ENCODE measurements at regions of chr1 and their contacts with region 1.

Region 1: DNA sequence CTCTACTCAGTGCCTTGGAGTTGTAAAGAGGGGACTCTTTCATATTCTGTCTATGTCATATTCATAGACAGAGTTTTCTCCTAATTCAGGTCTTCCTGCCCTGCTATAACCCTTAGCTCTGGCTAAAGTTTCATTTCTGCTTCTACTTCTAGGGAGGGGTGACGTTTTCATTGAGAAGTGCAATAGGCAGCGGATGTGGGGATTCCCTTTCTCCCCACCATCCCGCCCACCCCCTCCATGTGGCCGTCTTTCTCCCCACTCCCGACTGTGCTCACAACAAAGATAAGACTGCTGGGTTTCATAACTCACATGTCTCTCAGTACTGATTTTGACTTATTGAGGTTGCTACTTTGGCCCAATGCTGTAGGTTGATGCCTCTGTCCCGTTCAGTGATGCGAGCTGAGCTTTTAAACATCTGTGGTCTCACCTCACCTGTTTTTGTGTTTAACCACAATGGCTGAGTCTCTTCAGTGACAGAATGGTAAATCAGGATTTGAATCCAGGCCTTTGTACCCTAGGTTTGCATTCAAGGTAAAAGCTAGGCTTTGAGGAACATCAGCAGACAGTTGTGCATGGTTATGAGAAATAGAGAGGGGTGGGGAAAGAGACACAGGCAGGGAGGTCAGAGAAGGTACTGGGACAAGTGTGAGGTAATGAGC is 7.8 kb upstream of the KIF14 start:
- DNase-seq: peak; percentile 89
- ATAC-seq: peak; percentile 82
- H3K4me3 ChIP-seq: peak overlapping the region; percentile 61
- H3K27ac ChIP-seq: peak overlapping the region; percentile 96
- H3K4me1 ChIP-seq: peaks cover 37% of the 10 kb centered on the region
- H3K27me3 ChIP-seq: no peaks in the 10 kb centered on the region
- CTCF ChIP-seq: no peak
- EP300 ChIP-seq: peak; percentile 54 to 55; a peak in 2 of 4 replicates
- POLR2A ChIP-seq: no peak
- RAD21 ChIP-seq: no peak

Region 2: GRCh38 chr1:200558866-200559459 is 69.4 kb before region 1 on chr1:
- CTCF ChIA-PET with region 1: interaction called, 43 read pairs
- POLR2A ChIA-PET with region 1: interaction called, 5 read pairs
- RAD21 ChIA-PET with region 1: interaction called, 70 read pairs
- SMC1A ChIA-PET with region 1: interaction called, 37 read pairs
- in situ Hi-C with region 1: no loop called
- intact Hi-C with region 1: no loop called
- DNase-seq: no peak
- ATAC-seq: peak; percentile 64
- H3K4me3 ChIP-seq: no peak overlapping the region
- H3K27ac ChIP-seq: no peak overlapping the region
- H3K4me1 ChIP-seq: peaks cover 17% of the 10 kb centered on the region
- H3K27me3 ChIP-seq: no peaks in the 10 kb centered on the region
- CTCF ChIP-seq: peak; percentile 56 to 77 (median 60)
- EP300 ChIP-seq: no peak
- POLR2A ChIP-seq: no peak
- RAD21 ChIP-seq: peak; percentile 82

Region 3: DNA sequence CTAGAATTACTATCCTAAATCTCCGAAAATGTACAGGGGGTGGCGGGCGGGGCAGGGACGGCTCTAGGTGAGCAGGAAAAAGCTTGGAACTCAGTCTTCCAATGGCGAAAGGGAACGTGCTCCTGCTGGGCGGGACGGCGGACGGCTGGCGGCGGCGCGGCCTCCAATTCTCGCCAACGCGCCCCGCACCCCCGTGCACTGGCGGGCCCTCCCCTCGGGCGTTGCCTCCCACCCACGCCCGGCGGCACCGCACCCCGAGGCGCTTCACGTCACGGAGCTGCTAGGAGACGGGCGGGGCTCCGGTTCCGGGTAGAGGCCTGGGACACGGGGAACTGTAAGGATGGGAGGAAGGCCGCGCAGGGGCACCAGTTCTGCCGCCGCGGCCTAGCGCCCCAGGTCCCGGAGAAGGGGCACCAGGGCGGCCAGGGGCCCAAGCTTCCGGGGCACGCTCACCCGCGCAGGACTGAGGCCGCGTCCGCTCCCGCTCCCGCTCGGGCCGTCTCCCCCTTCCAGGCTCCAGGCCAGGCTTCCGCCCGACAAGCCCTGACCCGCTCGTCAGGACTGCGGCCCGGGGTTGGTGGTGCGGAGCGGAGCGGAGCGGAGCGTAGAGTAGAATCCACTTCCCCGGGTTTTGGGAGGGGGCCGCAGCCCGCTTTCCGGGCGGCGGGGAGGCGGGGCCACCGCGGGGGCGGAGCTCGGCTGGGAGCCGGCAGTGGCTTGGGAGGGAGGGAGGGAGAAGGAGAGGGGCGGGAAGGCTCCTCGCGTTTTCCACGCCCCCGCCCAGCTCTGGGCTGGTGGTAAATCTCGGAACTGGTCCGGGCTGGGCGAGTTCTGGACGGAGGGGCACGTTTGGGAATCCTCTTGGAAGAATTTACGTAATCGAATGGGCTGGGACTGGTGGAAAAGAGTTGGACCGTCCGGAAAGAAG is 41.2 kb after region 1 on chr1 and contains the start of gene DDX59:
- CTCF ChIA-PET with region 1: interaction called, 36 read pairs
- POLR2A ChIA-PET with region 1: interaction called, 38 read pairs
- RAD21 ChIA-PET with region 1: interaction called, 175 read pairs
- SMC1A ChIA-PET with region 1: interaction called, 79 read pairs
- in situ Hi-C with region 1: no loop called
- intact Hi-C with region 1: loop called (anchors 1 kb)
- DNase-seq: peak; percentile 80
- ATAC-seq: peak; percentile 90
- H3K4me3 ChIP-seq: peak within 1 kb of the TSS; percentile 85
- H3K27ac ChIP-seq: peak within 1 kb of the TSS; percentile 98
- H3K4me1 ChIP-seq: no peaks in the 10 kb centered on the region; the same call in 1 of the 2 replicates
- H3K27me3 ChIP-seq: no peaks in the 10 kb centered on the region
- CTCF ChIP-seq: no peak
- EP300 ChIP-seq: no peak
- POLR2A ChIP-seq: peak; percentile 91
- RAD21 ChIP-seq: no peak
- polyA plus RNA-seq, gene DDX59: 17.3 to 17.5 TPM

Region 4: GRCh38 chr1:200762099-200762498 is 133.7 kb after region 1 on chr1:
- CTCF ChIA-PET with region 1: no interaction called
- POLR2A ChIA-PET with region 1: no interaction called
- RAD21 ChIA-PET with region 1: no interaction called
- SMC1A ChIA-PET with region 1: no interaction called
- in situ Hi-C with region 1: no loop called
- intact Hi-C with region 1: no loop called
- DNase-seq: no peak
- ATAC-seq: no peak
- H3K4me3 ChIP-seq: no peak overlapping the region
- H3K27ac ChIP-seq: no peak overlapping the region
- H3K4me1 ChIP-seq: no peaks in the 10 kb centered on the region
- H3K27me3 ChIP-seq: no peaks in the 10 kb centered on the region
- CTCF ChIP-seq: no peak
- EP300 ChIP-seq: no peak
- POLR2A ChIP-seq: no peak
- RAD21 ChIP-seq: no peak

Region 5: GRCh38 chr1:200780545-200781369 is 152.4 kb after region 1 on chr1:
- CTCF ChIA-PET with region 1: interaction called, 45 read pairs
- POLR2A ChIA-PET with region 1: interaction called, 4 read pairs
- RAD21 ChIA-PET with region 1: interaction called, 12 read pairs
- SMC1A ChIA-PET with region 1: interaction called, 14 read pairs
- in situ Hi-C with region 1: no loop called
- intact Hi-C with region 1: no loop called
- DNase-seq: peak; percentile 61
- ATAC-seq: peak; percentile 89
- H3K4me3 ChIP-seq: peak overlapping the region; percentile 4; the same call in 1 of the 2 replicates
- H3K27ac ChIP-seq: peak overlapping the region; percentile 71
- H3K4me1 ChIP-seq: peaks cover 10% of the 10 kb centered on the region
- H3K27me3 ChIP-seq: no peaks in the 10 kb centered on the region
- CTCF ChIP-seq: no peak
- EP300 ChIP-seq: no peak
- POLR2A ChIP-seq: no peak
- RAD21 ChIP-seq: no peak

Region 6: GRCh38 chr1:200866521-200866920 is 238.2 kb after region 1 on chr1:
- CTCF ChIA-PET with region 1: interaction called, 21 read pairs
- POLR2A ChIA-PET with region 1: interaction called, 7 read pairs
- RAD21 ChIA-PET with region 1: interaction called, 10 read pairs
- SMC1A ChIA-PET with region 1: interaction called, 10 read pairs
- in situ Hi-C with region 1: no loop called
- intact Hi-C with region 1: loop called (anchors 2 kb)
- DNase-seq: peak; percentile 98
- ATAC-seq: peak; percentile 74
- H3K4me3 ChIP-seq: no peak overlapping the region
- H3K27ac ChIP-seq: peak overlapping the region; percentile 71
- H3K4me1 ChIP-seq: peaks cover 71% of the 10 kb centered on the region
- H3K27me3 ChIP-seq: no peaks in the 10 kb centered on the region
- CTCF ChIP-seq: no peak
- EP300 ChIP-seq: peak; percentile 96 to 97
- POLR2A ChIP-seq: no peak
- RAD21 ChIP-seq: peak; percentile 22; the same call in 1 of the 2 replicates

Region 7: DNA sequence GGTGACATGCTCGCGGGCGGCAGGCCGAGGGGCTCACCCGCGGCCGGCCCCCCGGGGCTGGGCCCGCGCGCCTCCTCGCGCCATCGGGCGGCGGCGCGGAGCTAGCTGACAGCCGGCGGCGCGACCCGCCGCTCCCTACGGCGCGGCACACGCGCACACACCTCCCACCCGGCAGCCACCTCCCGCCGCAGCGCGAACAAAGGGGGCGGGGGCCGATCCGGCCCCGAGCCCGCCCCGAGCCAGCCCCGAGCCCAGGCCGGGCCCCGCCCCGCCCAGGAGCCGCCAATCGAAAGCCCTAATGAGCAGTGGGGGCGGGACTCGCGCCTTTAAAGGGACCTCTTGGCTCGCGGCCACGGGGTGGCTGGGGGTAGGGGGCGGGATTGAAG is 395.2 kb after region 1 on chr1 and contains the start of gene KIF21B:
- CTCF ChIA-PET with region 1: interaction called, 23 read pairs
- POLR2A ChIA-PET with region 1: interaction called, 12 read pairs
- RAD21 ChIA-PET with region 1: no interaction called
- SMC1A ChIA-PET with region 1: interaction called, 3 read pairs
- in situ Hi-C with region 1: no loop called
- intact Hi-C with region 1: no loop called
- DNase-seq: no peak
- ATAC-seq: peak; percentile 68
- H3K4me3 ChIP-seq: peak within 1 kb of the TSS; percentile 93
- H3K27ac ChIP-seq: peak within 1 kb of the TSS; percentile 94
- H3K4me1 ChIP-seq: peaks cover 81% of the 10 kb centered on the region
- H3K27me3 ChIP-seq: no peaks in the 10 kb centered on the region
- CTCF ChIP-seq: no peak
- EP300 ChIP-seq: no peak
- POLR2A ChIP-seq: peak; percentile 74
- RAD21 ChIP-seq: no peak
- polyA plus RNA-seq, gene KIF21B: 2.3 to 2.9 TPM

Region 8: DNA sequence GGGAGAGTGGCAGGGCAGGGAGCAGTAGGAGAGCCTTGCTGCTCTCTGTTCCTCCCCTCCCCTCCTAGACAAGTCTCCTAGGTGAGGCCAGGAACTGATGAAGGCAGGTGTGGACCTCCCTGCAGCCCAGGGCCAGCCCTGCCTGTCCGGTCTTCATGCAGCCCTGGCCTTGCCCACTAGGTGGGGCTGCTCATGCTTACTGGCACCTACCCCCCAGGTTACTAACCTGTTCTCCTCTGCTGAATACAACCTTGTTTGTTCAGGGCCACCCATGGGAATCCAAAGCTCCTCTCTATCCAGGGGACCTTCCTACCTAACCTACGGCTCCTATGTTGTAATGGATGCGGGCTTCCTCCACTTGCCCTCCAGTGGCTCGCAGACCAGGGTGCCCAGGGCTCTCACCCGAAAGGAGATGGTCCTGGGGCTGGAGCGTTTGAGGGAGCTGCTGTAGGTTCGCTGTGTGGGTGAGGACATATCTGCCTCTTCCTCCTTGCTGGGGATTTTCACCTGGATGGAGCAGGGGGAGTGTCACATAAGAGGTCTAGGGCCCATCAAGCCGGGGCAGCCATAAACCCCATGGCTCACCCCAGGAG is 757.0 kb after region 1 on chr1:
- CTCF ChIA-PET with region 1: no interaction called
- POLR2A ChIA-PET with region 1: no interaction called
- RAD21 ChIA-PET with region 1: no interaction called
- SMC1A ChIA-PET with region 1: no interaction called
- in situ Hi-C with region 1: no loop called
- intact Hi-C with region 1: no loop called
- DNase-seq: no peak
- ATAC-seq: peak; percentile 99
- H3K4me3 ChIP-seq: no peak overlapping the region
- H3K27ac ChIP-seq: no peak overlapping the region
- H3K4me1 ChIP-seq: no peaks in the 10 kb centered on the region
- H3K27me3 ChIP-seq: no peaks in the 10 kb centered on the region; a peak in 1 of 4 replicates
- CTCF ChIP-seq: peak; percentile 93 to 97 (median 96); a peak in 5 of 6 replicates
- EP300 ChIP-seq: no peak
- POLR2A ChIP-seq: no peak
- RAD21 ChIP-seq: peak; percentile 78